Breast epithelium (tissue), 4 donors: ENCODE measurements at regions of chr21 and their contacts with region 1.

Region 1: GRCh38 chr21:41406340-41406739 is 19.7 kb upstream of the MX1 start:
- DNase-seq: no peak
- H3K4me3 ChIP-seq: no peak overlapping the region
- H3K27ac ChIP-seq: no peak overlapping the region
- H3K4me1 ChIP-seq: no peaks in the 10 kb centered on the region
- H3K27me3 ChIP-seq: no peaks in the 10 kb centered on the region
- CTCF ChIP-seq: no peak
- POLR2A ChIP-seq: no peak

Region 2: GRCh38 chr21:41393876-41394465 is 12.4 kb before region 1 on chr21:
- intact Hi-C with region 1: loop called (anchors 1 kb)
- DNase-seq: no peak
- H3K4me3 ChIP-seq: no peak overlapping the region
- H3K27ac ChIP-seq: no peak overlapping the region
- H3K4me1 ChIP-seq: no peaks in the 10 kb centered on the region
- H3K27me3 ChIP-seq: no peaks in the 10 kb centered on the region
- CTCF ChIP-seq: no peak
- POLR2A ChIP-seq: no peak

Region 3: GRCh38 chr21:41441521-41441920 is 35.2 kb after region 1 on chr21:
- intact Hi-C with region 1: loop called (anchors 2 kb)
- DNase-seq: peak in 1 of 2 donors; percentile 24
- H3K4me3 ChIP-seq: no peak overlapping the region
- H3K27ac ChIP-seq: no peak overlapping the region
- H3K4me1 ChIP-seq: no peaks in the 10 kb centered on the region
- H3K27me3 ChIP-seq: no peaks in the 10 kb centered on the region
- CTCF ChIP-seq: no peak
- POLR2A ChIP-seq: no peak